Activated CD4-positive, alpha-beta T cell treated with anti-CD3 and anti-CD28 coated beads, Interleukin-2, amount 10 ng/mL, durations not matched to agents 24 days and 14 days (primary cell): ENCODE measurements at regions of chr4 and their contacts with region 1.

Region 1: GRCh38 chr4:105215609-105216313 is 69.1 kb downstream of the TET2 start:
- DNase-seq: no peak
- H3K4me3 Mint-ChIP-seq: peak overlapping the region; percentile 42
- H3K27ac Mint-ChIP-seq: peak overlapping the region; percentile 63
- H3K4me1 Mint-ChIP-seq: peaks cover 12% of the 10 kb centered on the region
- H3K27me3 Mint-ChIP-seq: no peaks in the 10 kb centered on the region

Region 2: GRCh38 chr4:105191621-105192210 is 24.0 kb before region 1 on chr4:
- intact Hi-C with region 1: loop called (anchors 1 kb)
- DNase-seq: no peak
- H3K4me3 Mint-ChIP-seq: peak overlapping the region; percentile 8
- H3K27ac Mint-ChIP-seq: peak overlapping the region; percentile 79
- H3K4me1 Mint-ChIP-seq: peaks cover 45% of the 10 kb centered on the region
- H3K27me3 Mint-ChIP-seq: no peaks in the 10 kb centered on the region